Cardiac septum (tissue), 1 donor: ENCODE measurements at regions of chr18 and their contacts with region 1.

Region 1: DNA sequence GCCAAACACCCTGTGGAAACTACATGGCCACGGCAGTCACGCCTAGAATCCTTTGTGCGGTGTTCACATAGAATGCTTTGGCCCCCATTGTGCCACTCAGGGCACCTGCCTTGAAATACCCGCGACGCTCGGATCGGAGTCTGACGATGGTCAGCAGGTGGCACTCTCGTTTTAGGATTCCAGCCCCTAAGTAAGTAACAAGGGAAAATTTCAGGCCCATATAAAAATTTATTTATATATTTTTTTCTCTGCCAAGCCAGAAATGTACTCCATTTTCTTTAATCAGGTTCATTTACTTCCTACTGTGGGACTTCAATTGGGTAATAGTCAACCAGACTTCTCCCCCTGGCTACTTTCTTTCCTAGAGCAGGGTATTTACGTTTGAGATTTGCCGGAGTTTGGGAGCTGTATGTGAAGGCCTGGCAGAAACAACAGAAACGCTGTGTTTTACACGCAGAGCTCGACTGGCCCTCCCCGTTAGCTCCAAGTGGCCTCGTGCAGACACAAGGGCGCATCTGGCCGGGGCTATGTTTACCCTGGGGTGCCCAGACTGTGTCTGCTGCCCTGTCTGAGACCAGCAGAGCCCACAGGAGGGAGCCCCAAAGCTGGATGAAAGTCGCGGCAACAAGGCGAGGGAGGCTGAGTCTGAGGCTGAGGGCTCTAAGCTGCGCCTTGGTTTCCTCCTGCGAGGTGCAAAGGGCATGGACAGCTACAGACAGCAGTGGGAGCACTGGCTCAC is 41.6 kb downstream of the LRRC30 start:
- DNase-seq: peak; percentile 78

Region 2: GRCh38 chr18:7325126-7325430 is 52.6 kb after region 1 on chr18:
- intact Hi-C with region 1: loop called (anchors 2 kb)
- DNase-seq: no peak

Region 3: GRCh38 chr18:7370802-7371201 is 98.3 kb after region 1 on chr18:
- intact Hi-C with region 1: loop called (anchors 1 kb)
- DNase-seq: peak; percentile 89

Region 4: DNA sequence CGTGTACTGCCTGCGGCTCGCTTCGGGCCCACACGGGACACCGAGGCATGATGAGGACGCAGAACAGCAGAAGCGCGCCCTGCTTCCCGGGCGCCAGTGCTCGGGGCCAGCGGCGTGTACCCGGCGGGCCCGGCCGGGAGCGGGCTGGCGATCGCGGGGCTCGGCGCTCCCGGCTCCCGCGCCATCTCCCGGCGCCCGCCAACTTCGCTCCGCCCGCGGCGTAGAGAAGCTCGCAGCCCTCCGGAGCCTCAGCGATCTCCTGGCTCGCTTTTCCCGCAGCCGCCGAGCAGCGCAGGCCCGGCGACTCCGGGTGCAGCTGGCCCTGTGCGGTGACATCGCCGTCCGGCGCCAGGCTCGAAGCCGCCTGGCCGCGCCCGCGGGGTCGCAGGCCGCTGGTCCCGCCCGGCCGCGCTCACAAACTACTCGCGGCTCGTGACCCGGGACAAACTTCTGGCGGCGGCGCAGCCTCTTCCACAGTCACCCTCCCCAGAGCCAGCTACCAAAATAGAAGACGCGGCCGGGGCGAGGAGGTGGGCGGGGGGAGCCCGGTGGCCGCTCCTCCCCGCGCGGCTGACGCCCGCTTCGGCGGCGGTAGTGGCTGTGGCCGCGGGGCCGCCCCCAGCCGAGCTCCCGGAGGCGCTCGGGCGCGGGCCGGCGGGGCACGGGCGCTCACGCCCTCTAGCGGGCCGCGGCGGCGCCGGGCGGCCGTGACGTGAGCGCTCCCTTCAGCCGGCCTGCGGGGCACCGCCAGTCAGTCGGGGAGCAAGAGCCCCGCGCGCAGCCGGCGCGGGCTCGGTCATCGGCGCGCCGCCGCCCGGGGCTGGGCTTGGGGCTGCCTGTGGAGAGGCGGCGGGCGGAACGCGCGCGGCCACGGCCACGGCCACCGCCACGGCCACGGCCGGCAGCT is 294.3 kb after region 1 on chr18 and contains the start of gene PTPRM:
- intact Hi-C with region 1: loop called (anchors 1 kb)
- DNase-seq: peak; percentile 94
- total RNA-seq, gene PTPRM: 132 TPM

Region 5: DNA sequence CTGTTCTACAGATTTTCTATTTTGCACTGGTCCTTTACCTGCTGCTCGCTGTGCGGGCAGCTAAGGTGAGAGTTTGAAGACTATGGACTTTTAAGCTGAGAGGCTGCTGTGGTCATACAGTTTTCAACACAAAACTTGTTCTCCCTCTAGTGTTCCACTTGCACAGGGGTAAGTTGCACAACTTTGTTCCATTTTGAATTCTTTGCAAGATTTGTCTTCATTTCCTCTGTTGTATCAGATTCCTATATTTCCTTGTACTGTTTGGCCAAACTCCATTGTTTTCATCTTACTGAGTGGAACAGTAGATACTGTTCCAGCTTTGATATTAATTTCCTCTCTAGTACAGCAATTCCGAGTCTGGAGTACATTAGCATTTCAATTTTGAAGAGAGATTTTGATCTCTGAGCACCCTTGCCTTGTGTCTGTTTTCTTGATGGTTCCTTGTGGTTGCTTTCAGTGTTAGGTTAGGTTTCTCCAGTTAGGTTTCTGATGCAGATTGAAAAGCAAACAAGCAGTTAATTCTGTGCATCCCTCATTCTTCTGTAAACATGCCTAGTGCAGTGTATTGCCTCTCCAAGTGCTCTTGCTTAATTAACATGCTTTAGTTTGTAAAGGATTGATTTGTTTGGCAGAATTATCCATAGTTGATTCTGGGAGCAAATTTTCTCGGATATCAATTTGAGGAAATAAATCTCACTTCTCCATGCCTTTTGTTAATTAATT is 483.4 kb after region 1 on chr18:
- intact Hi-C with region 1: loop called (anchors 5 kb)
- DNase-seq: no peak

Region 6: DNA sequence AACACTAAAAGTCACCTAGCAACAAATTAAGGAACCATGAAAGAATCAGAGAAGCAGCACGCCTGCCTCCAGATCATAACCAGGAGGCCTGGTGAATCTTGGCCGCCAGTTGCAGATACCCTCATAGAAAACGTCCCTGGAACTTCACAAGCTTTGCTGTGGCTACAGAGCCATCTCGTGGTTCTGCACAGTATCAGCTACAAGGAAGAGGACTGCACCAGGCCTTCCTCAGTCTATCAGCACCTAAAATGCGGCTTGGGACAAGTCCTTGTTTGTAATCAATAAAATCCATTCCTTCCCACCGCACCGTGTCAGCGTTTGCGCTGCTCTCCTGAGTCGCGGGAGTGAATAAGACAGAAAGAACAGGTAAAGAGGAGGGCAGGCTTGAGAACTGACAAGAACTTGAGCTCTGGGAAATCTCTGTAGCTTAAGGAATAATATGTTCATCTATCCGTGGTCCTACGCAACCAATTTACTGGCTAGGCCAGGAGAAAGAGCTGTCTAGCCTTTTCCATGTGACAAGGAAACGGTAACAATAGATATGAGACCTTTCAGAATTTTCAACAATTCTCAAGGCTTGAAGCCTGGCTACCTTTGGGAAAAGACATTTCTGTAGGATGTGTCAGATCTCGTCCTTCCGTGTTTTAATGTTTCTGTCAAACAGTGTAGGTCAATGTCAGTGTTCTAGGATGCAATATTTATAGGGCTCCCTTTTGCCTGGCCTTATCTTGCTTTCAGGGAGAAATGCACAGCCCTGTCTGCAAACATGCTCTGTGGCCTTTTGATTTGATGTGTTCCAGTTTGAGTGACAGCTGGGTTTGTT is 1208.2 kb after region 1 on chr18:
- intact Hi-C with region 1: loop called (anchors 5 kb)
- DNase-seq: peak; percentile 71